ACHN (cell line): ENCODE measurements at regions of chr4 and their contacts with region 1.

Region 1: GRCh38 chr4:150297861-150298474 is 219.7 kb downstream of the DCLK2 start:
- DNase-seq: peak; percentile 62

Region 2: DNA sequence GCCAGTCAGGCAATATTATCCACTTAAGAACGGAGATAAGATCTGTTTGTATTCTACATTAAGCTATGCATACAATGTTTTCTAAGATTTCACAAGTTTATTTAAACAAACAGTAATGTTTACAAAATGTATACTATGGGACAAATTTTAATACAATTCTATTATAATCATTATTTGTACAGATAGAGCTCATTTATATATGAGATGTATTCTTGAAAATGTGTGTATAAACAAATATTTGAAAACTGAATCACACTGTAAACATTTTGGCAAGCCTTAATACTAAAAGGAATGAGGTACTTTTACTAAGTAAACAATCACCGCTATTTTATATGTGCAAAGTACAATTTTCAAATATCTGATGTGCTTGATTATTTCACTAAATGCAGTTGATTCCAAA is 164.8 kb after region 1 on chr4:
- in situ Hi-C with region 1: no loop called
- DNase-seq: no peak

Region 3: DNA sequence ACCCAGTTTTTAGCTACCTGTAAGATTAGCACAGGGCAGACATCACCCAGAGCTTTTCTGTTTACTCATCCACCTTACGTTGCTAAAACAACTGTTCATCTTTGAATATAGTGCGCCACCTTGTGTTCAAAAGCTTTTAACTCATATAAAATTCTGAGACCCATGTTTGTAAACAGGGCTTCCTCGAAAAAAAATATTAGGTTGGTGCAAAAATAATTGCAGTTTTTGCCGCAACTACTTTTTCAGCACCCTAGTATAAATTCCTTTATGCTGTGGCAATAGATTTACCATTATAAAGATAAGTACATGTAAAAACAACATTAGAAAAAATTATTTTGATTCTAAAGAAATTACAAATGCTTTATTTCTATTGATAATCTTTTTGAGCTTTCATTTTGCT is 569.2 kb after region 1 on chr4:
- in situ Hi-C with region 1: loop called (anchors 25 kb)
- DNase-seq: peak; percentile 85